Activated CD4-positive, alpha-beta memory T cell treated with anti-CD3 and anti-CD28 coated beads for 36 hours (primary cell): ENCODE measurements at regions of chr1 and their contacts with region 1.

Region 1: GRCh38 chr1:117605774-117606648 is at the start of gene TENT5C:
- DNase-seq: peak; percentile 99
- H3K4me3 Mint-ChIP-seq: peak within 1 kb of the TSS; percentile 91
- H3K27ac Mint-ChIP-seq: peak within 1 kb of the TSS; percentile 94
- H3K4me1 Mint-ChIP-seq: peaks cover 41% of the 10 kb centered on the region
- H3K27me3 Mint-ChIP-seq: no peaks in the 10 kb centered on the region
- total RNA-seq, gene TENT5C: 13.8 to 14.0 TPM

Region 2: DNA sequence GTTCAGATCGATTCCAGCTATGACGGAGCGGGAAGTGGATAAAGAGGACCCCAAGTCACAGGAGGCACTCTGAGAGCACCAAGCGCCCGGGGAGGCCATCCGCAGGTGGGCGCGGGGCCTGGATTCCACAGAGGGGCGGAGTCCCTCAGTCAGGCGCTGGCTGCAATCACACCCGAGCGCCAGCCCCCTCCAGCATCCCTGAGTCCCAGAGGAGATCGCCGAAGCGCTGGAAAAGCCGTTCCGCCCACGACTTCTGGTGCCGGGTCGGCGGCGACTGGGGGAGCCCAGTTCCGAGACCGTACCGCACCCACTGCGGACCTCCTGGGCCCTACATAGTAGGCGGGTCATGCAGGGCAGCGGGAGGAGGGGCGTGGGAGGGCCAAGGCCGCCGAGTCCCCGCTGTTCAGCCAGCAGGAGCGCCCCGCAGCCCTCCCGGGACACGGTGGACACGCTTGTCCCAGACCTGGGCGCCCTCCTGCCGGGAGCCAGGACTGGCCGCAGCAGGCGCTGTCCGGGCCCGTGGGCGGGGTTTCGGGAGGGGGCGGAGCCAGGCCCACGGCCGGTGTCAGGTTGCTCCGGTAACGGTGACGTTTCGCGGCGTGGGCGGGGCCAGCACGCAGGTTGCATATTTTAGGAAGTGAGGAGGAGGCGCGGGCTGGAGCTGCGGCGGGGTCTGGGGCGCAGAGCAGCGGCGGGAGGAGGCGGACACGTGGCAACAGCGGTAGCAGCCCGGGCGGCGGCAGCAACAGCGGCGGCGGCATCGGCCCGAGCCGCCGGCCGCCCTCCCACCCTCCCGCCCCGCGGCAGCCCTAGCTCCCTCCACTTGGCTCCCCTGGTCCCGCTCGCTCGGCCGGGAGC is 1233.2 kb before region 1 on chr1 and contains the start of gene ATP1A1:
- CTCF ChIA-PET with region 1: no interaction called
- POLR2A ChIA-PET with region 1: no interaction called
- intact Hi-C with region 1: loop called (anchors 10 kb)
- DNase-seq: peak; percentile 98
- H3K4me3 Mint-ChIP-seq: peak within 1 kb of the TSS; percentile 88
- H3K27ac Mint-ChIP-seq: peak within 1 kb of the TSS; percentile 97
- H3K4me1 Mint-ChIP-seq: peaks cover 38% of the 10 kb centered on the region
- H3K27me3 Mint-ChIP-seq: peaks cover 3% of the 10 kb centered on the region
- total RNA-seq, gene ATP1A1: 253 to 258 TPM

Region 3: DNA sequence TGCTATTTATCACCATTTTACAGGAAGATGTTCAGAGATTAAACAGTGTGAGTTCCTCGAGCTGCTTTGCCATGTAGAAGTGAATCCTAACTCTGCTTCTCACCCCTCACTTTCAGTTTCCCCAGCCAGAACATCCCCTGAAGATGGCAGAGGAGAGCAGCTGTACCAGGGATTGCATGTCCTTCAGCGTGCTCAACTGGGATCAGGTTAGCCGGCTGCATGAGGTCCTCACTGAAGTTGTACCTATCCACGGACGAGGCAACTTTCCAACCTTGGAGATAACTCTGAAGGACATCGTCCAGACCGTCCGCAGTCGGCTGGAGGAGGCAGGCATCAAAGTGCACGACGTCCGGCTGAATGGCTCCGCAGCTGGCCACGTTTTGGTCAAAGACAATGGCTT is 16.7 kb after region 1 on chr1:
- CTCF ChIA-PET with region 1: interaction called, 15 read pairs
- POLR2A ChIA-PET with region 1: interaction called, 26 read pairs
- intact Hi-C with region 1: loop called (anchors 2 kb)
- DNase-seq: no peak
- H3K4me3 Mint-ChIP-seq: no peak overlapping the region
- H3K27ac Mint-ChIP-seq: peak overlapping the region; percentile 26
- H3K4me1 Mint-ChIP-seq: peaks cover 38% of the 10 kb centered on the region
- H3K27me3 Mint-ChIP-seq: no peaks in the 10 kb centered on the region

Region 4: DNA sequence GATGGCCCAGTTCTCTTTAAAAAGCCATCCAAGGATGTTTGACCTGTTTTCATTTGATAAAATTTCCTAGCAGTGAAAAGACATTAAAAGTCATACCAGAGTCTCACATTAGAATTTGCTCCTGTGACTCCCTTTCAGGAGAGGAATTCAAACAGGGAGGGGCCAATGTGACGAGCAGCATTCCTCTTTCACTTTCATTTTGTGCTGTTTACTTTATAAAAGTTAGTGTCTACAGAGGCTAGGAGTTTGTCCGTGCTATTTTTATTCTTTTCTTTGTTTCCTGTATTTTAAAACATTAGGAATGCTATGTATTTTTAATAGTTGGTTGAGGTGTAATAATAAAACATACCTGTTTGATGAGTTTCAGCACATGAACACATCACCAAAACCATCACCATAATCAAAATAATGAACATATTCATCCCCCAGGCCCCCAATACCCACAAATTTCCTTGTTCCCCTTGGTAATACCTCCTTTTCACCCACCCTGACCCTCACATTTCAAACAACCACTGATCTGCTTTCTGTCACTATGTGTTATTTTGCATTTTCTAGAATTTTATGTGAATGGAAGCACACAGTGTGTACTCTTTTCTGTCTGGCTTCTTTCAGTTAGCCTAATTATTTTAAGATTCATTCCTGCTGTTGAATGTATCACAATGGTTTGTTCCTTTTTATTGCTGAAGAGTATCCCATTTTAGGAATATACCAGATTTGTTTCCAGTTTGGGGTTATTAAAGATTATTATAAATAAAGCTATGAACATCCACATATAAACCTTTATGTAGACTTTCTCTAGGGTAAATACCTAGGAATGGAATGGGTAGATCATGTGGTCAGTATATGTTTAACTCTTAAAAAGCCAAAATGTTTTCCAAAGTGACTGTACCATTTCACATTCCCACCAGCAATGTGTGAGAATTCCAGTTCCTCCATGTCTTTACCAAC is 129.3 kb after region 1 on chr1:
- CTCF ChIA-PET with region 1: no interaction called
- POLR2A ChIA-PET with region 1: no interaction called
- intact Hi-C with region 1: loop called (anchors 1 kb)
- DNase-seq: peak; percentile 55
- H3K4me3 Mint-ChIP-seq: peak overlapping the region; percentile 66
- H3K27ac Mint-ChIP-seq: peak overlapping the region; percentile 73
- H3K4me1 Mint-ChIP-seq: peaks cover 10% of the 10 kb centered on the region
- H3K27me3 Mint-ChIP-seq: no peaks in the 10 kb centered on the region

Region 5: DNA sequence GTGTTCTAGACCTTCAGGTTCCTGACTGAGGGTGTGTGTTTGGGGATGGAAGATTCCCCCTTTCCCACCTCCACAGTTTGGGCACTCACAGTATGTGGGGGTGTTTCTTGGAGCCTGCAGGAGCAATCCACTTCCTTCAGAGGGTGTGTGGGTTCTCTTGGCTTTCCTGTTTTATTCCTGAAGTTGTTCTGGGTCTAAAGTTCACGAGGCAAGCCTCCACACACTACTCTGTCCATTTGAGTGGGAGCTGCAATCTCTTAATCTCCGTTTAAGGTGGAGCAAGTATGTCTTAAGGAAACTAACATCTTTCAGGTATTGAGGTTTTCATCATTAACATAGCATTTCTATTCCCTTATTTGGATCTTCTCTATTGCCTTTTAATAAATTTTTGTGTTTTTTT is 141.6 kb after region 1 on chr1:
- CTCF ChIA-PET with region 1: no interaction called
- POLR2A ChIA-PET with region 1: no interaction called
- intact Hi-C with region 1: no loop called
- DNase-seq: no peak
- H3K4me3 Mint-ChIP-seq: no peak overlapping the region
- H3K27ac Mint-ChIP-seq: no peak overlapping the region
- H3K4me1 Mint-ChIP-seq: no peaks in the 10 kb centered on the region
- H3K27me3 Mint-ChIP-seq: peaks cover 3% of the 10 kb centered on the region

Region 6: DNA sequence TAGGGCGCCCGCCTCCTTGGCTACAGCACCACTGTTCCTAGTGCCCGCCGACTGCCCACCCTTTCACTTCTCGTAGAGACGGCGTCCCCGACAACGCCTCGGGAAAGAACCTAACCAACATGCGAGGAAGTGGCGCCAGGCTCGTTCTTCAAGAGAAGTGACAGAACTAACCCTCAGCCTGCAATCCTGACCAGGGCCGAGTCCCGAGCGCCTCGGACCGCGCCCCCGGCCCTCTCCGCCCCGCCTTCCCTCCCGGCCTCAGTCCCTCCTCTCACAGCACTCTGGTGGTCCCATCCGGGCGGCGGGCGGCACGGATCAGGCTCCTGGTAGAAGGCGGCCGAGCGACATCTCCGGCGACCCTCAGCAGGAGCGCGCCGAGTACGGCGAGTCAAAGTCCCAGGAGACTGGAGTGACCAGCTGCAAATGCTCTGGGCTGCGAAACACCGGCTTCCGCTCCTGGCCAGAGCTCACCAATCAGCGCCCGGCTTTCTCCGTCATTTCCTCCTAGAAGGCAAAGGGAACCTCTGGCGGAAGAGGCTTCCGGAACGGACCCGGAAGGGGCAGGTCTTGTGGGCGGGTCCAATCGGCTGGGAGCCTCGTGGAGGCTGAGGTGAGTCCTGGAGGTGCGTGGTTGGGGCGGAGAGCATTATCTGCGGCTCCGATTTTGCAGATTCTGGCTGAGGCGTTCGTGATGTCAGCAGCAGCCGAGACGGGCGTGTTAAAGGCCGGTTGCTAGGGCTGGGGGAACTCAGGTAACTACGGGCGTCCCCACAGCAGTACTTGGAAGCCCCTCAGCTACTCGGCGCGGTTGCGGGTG is 323.4 kb after region 1 on chr1 and contains the starts of genes GDAP2 and WDR3:
- CTCF ChIA-PET with region 1: no interaction called
- POLR2A ChIA-PET with region 1: no interaction called
- intact Hi-C with region 1: loop called (anchors 10 kb)
- DNase-seq: peak; percentile 98
- H3K4me3 Mint-ChIP-seq: peak within 1 kb of the TSS; percentile 96
- H3K27ac Mint-ChIP-seq: peak within 1 kb of the TSS; percentile 86
- H3K4me1 Mint-ChIP-seq: peaks cover 48% of the 10 kb centered on the region
- H3K27me3 Mint-ChIP-seq: no peaks in the 10 kb centered on the region
- total RNA-seq, gene GDAP2: 19.1 to 20.8 TPM
- total RNA-seq, gene WDR3: 48.3 to 51.8 TPM